ENCODE measurements at regions of chr11 and their contacts with region 1.

Region 1: DNA sequence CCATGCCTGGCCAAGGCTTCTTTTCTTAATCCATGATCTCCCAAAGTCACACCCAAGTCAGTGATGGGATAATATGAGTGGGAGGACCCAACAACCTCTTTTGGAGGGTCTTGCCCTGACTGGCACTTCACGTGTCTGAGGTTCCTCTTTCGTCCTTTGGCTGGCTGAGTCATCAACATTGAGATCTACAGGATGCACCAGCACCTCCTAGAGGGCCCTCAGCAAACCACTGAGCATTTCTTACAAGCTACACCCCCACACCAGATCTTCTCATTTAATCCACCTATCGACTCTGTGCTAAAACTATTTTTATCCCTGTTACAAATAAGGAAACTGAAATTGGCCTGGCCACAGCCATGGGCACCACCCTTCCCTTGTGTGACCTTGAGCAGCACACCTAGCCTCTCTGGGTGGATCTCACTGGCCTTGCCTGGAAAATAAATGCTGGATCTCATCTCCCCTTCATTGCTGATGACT is 63.4 kb downstream of the FLI1 start:
- DNase-seq: peak; percentile 41
- ATAC-seq: peak; percentile 79
- H3K4me3 Mint-ChIP-seq: peak overlapping the region; percentile 66
- H3K27ac Mint-ChIP-seq: peak overlapping the region; percentile 91
- H3K4me1 Mint-ChIP-seq: peaks cover 80% of the 10 kb centered on the region
- H3K27me3 Mint-ChIP-seq: no peaks in the 10 kb centered on the region
- CTCF ChIP-seq: peak; percentile 81

Region 2: GRCh38 chr11:128195057-128195751 is 562.1 kb before region 1 on chr11:
- CTCF ChIA-PET with region 1: no interaction called
- POLR2A ChIA-PET with region 1: no interaction called
- intact Hi-C with region 1: loop called (anchors 1 kb)
- DNase-seq: no peak
- ATAC-seq: peak; percentile 84
- H3K4me3 Mint-ChIP-seq: peak overlapping the region; percentile 16
- H3K27ac Mint-ChIP-seq: peak overlapping the region; percentile 22
- H3K4me1 Mint-ChIP-seq: peaks cover 18% of the 10 kb centered on the region
- H3K27me3 Mint-ChIP-seq: no peaks in the 10 kb centered on the region
- CTCF ChIP-seq: no peak

Region 3: GRCh38 chr11:128323381-128323780 is 433.9 kb before region 1 on chr11:
- CTCF ChIA-PET with region 1: interaction called, 4 read pairs
- POLR2A ChIA-PET with region 1: no interaction called
- intact Hi-C with region 1: loop called (anchors 2 kb)
- DNase-seq: no peak
- ATAC-seq: peak; percentile 25
- H3K4me3 Mint-ChIP-seq: no peak overlapping the region
- H3K27ac Mint-ChIP-seq: peak overlapping the region; percentile 59
- H3K4me1 Mint-ChIP-seq: peaks cover 49% of the 10 kb centered on the region
- H3K27me3 Mint-ChIP-seq: no peaks in the 10 kb centered on the region
- CTCF ChIP-seq: no peak

Region 4: GRCh38 chr11:128522055-128522942 is 235.0 kb before region 1 on chr11:
- CTCF ChIA-PET with region 1: interaction called, 3 read pairs
- POLR2A ChIA-PET with region 1: interaction called, 7 read pairs
- intact Hi-C with region 1: loop called (anchors 1 kb)
- DNase-seq: peak; percentile 88
- ATAC-seq: peak; percentile 89
- H3K4me3 Mint-ChIP-seq: peak overlapping the region; percentile 99
- H3K27ac Mint-ChIP-seq: peak overlapping the region; percentile 97
- H3K4me1 Mint-ChIP-seq: peaks cover 56% of the 10 kb centered on the region
- H3K27me3 Mint-ChIP-seq: no peaks in the 10 kb centered on the region
- CTCF ChIP-seq: no peak

Region 5: DNA sequence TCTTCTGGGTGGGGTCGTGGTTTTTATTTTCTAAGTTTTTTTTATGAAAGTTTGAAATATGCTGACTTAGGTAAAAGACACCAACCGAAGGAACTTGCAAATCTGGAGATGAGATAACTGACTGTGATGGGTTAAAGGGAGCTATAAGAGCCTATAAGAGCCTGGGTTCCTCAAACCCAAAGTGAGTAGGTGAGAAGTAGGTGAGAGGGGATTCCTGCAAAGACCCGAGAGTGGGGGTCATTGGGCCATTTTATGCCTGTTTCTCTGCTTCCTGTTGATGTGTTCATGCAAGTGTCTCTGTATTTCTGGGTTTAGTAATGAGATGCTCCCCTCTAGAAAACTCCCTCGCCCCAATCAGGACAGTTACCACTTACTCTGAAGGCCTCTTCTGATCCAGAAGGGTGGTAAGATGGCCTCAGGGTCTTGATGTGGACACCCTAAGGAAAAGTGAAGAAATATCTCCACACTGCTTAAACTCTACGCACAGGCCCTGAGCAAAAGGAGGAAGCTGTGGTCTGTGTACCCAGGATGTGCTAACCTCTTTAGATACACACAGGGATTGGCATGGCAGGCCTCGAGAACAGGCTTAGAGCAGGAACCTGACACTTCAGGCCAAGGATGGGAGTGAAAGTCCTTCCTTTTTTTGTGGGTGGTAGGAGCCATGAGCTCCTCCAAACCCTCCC is 61.6 kb before region 1 on chr11:
- CTCF ChIA-PET with region 1: interaction called, 10 read pairs
- POLR2A ChIA-PET with region 1: interaction called, 28 read pairs
- intact Hi-C with region 1: loop called (anchors 1 kb)
- DNase-seq: no peak
- ATAC-seq: peak; percentile 52
- H3K4me3 Mint-ChIP-seq: peak overlapping the region; percentile 96
- H3K27ac Mint-ChIP-seq: peak overlapping the region; percentile 97
- H3K4me1 Mint-ChIP-seq: peaks cover 72% of the 10 kb centered on the region
- H3K27me3 Mint-ChIP-seq: peaks cover 1% of the 10 kb centered on the region
- CTCF ChIP-seq: no peak

Region 6: GRCh38 chr11:128733440-128734102 is 23.7 kb before region 1 on chr11:
- CTCF ChIA-PET with region 1: interaction called, 20 read pairs
- POLR2A ChIA-PET with region 1: interaction called, 44 read pairs
- intact Hi-C with region 1: loop called (anchors 1 kb)
- DNase-seq: no peak
- ATAC-seq: peak; percentile 17
- H3K4me3 Mint-ChIP-seq: peak overlapping the region; percentile 71
- H3K27ac Mint-ChIP-seq: peak overlapping the region; percentile 98
- H3K4me1 Mint-ChIP-seq: peaks cover 99% of the 10 kb centered on the region
- H3K27me3 Mint-ChIP-seq: no peaks in the 10 kb centered on the region
- CTCF ChIP-seq: no peak

Region 7: GRCh38 chr11:128848815-128849455 is 91.7 kb after region 1 on chr11:
- CTCF ChIA-PET with region 1: interaction called, 7 read pairs
- POLR2A ChIA-PET with region 1: no interaction called
- intact Hi-C with region 1: loop called (anchors 1 kb)
- DNase-seq: peak; percentile 57
- ATAC-seq: peak; percentile 73
- H3K4me3 Mint-ChIP-seq: no peak overlapping the region
- H3K27ac Mint-ChIP-seq: peak overlapping the region; percentile 60
- H3K4me1 Mint-ChIP-seq: peaks cover 58% of the 10 kb centered on the region
- H3K27me3 Mint-ChIP-seq: no peaks in the 10 kb centered on the region
- CTCF ChIP-seq: peak; percentile 29

Measured in activated B cell treated with CpG ODN at 0.5 μM for 24 hours (primary cell).